ENCODE measurements at regions of chr18 and their contacts with region 1.

Region 1: DNA sequence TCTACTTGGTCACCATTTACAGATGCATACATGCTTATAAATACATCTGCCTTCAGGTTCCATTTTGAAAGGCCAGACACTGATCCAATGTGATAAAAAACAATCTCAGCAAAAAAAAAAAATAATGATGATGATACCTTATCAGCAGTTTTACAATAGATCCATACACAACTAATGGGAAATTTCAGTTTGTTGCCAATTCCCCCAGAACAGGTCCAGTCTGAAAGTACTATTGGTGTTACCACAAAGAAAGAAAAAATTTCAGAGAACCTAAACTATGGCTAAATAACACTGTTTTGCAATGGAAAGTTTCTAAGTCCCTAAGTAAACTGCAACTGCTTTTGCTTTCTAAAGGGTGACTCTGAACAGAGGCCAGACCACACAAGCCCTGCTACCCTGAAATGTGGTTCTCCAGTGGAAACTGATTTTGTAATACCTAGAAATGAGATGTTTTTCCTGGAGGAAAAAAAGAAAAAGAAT is 54.1 kb downstream of the LPIN2 start:
- DNase-seq: peak in 1 of 10 donors; percentile 13
- ATAC-seq: peak in 1 of 2 donors; percentile 36
- H3K4me3 Mint-ChIP-seq: peak overlapping the region in 9 of 10 donors; percentile 43 to 89 (median 65)
- H3K27ac Mint-ChIP-seq: peak overlapping the region; percentile 92 to 99 (median 98)
- H3K4me1 Mint-ChIP-seq: peaks cover 38 to 92% (median 87%) of the 10 kb centered on the region in 4 donors
- H3K27me3 Mint-ChIP-seq: no peaks in the 10 kb centered on the region

Region 2: DNA sequence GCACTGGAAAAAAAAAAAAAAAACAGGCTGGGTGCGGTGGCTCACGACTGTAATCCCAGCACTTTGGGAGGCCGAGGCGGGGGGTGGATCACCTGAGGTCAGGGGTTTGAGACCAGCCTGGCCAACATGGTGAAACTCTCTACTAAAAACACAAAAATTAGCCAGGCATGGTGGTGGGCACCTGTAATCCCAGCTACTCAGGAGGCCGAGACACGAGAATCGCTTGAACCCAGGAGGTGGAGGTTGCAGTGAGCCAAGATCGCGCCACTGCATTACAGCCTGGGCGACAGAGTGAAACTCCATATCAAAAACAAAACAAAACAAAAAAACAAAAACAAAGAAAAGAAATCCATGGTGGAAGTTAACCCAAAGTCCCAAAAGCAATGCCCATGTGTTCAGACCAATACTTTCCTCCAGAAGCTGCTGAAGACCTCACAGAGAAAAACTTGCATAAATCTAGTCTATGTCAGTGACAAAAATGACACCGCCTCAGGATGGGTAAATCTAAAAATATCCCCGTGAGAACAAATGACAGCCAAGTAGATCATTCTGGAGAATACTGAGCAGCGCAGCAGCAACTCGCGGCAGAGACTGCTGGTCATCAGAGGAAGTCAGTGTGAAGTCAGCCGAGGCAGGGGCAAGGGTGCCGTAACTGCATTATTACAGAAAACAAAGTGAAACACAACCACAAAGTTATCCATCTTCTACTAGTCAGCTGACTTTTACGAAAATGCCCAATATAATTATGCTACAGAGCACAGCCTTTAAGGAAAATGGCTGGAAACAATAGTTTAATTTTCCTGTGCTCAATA is 13.1 kb after region 1 on chr18:
- POLR2A ChIA-PET with region 1: interaction called, 160 read pairs
- DNase-seq: peak in 9 of 10 donors; percentile 15 to 74 (median 55)
- ATAC-seq: peak; percentile 58 to 74
- H3K4me3 Mint-ChIP-seq: peak overlapping the region; percentile 71 to 92 (median 86)
- H3K27ac Mint-ChIP-seq: peak overlapping the region; percentile 92 to 99 (median 97)
- H3K4me1 Mint-ChIP-seq: peaks cover 54 to 94% (median 94%) of the 10 kb centered on the region in 4 donors
- H3K27me3 Mint-ChIP-seq: no peaks in the 10 kb centered on the region

Region 3: GRCh38 chr18:2978646-2979045 is 19.8 kb after region 1 on chr18:
- POLR2A ChIA-PET with region 1: interaction called, 160 read pairs
- DNase-seq: no peak
- ATAC-seq: peak in 1 of 2 donors; percentile 18
- H3K4me3 Mint-ChIP-seq: peak overlapping the region; percentile 66 to 96 (median 86)
- H3K27ac Mint-ChIP-seq: peak overlapping the region; percentile 88 to 99 (median 96)
- H3K4me1 Mint-ChIP-seq: peaks cover 38 to 89% (median 82%) of the 10 kb centered on the region in 4 donors
- H3K27me3 Mint-ChIP-seq: no peaks in the 10 kb centered on the region

Region 4: GRCh38 chr18:3062798-3063680 is 104.2 kb after region 1 on chr18:
- POLR2A ChIA-PET with region 1: interaction called, 10 read pairs
- DNase-seq: peak; percentile 34 to 89 (median 59)
- ATAC-seq: peak; percentile 40 to 48
- H3K4me3 Mint-ChIP-seq: peak overlapping the region; percentile 35 to 86 (median 66)
- H3K27ac Mint-ChIP-seq: peak overlapping the region; percentile 70 to 99 (median 97)
- H3K4me1 Mint-ChIP-seq: peaks cover 35 to 70% (median 60%) of the 10 kb centered on the region in 4 donors
- H3K27me3 Mint-ChIP-seq: no peaks in the 10 kb centered on the region

Measured in naive thymus-derived CD8-positive, alpha-beta T cell (primary cell).